ENCODE measurements at regions of chr1 and their contacts with region 1.

Region 1: GRCh38 chr1:155609515-155610256 is at the start of gene MSTO1:
- DNase-seq: peak; percentile 80
- ATAC-seq: peak; percentile 97
- H3K4me3 ChIP-seq: peak within 1 kb of the TSS; percentile 62 to 69
- H3K27ac ChIP-seq: peak within 1 kb of the TSS; percentile 97
- H3K4me1 ChIP-seq: no peaks in the 10 kb centered on the region
- H3K27me3 ChIP-seq: no peaks in the 10 kb centered on the region
- CTCF ChIP-seq: no peak
- total RNA-seq, gene MSTO1: 60.9 TPM

Region 2: DNA sequence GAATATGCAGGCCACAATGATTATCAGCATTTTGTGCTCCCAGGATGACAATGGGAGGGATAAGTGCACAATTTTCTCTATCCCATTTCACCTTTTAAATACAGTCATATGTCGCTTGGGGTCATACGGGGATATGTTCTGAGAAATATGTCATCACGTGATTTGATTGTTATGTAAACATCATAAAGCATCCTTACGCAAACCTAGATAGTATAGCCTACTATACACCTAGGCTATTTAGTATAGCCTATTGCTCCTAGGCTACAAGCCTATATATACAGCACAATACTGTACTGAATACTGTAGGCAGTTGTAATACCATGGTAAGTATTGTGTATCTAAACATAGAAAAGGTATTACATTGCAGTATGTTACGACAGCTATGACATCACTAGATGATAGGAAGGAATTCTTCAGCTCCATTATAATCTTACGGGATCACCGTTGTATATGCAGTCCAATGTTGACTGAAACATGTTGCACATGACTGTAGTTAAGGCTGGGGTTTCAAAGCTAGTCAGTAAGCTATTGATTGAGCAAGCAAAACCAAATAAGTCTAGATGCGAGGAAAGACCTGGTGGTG is 270.1 kb before region 1 on chr1:
- CTCF ChIA-PET with region 1: no interaction called
- POLR2A ChIA-PET with region 1: interaction called, 10 read pairs
- in situ Hi-C with region 1: no loop called
- intact Hi-C with region 1: no loop called
- DNase-seq: no peak
- ATAC-seq: no peak; the same call in 1 of the 2 replicates
- H3K4me3 ChIP-seq: no peak overlapping the region
- H3K27ac ChIP-seq: no peak overlapping the region
- H3K4me1 ChIP-seq: no peaks in the 10 kb centered on the region
- H3K27me3 ChIP-seq: no peaks in the 10 kb centered on the region
- CTCF ChIP-seq: no peak

Region 3: GRCh38 chr1:155648551-155649147 is 39.0 kb after region 1 on chr1:
- CTCF ChIA-PET with region 1: interaction called, 16 read pairs
- POLR2A ChIA-PET with region 1: interaction called, 3 read pairs
- in situ Hi-C with region 1: no loop called
- intact Hi-C with region 1: no loop called
- DNase-seq: no peak
- ATAC-seq: peak; percentile 90
- H3K4me3 ChIP-seq: peak overlapping the region; percentile 18 to 31
- H3K27ac ChIP-seq: peak overlapping the region; percentile 20
- H3K4me1 ChIP-seq: peaks cover 27% of the 10 kb centered on the region
- H3K27me3 ChIP-seq: no peaks in the 10 kb centered on the region
- CTCF ChIP-seq: peak; percentile 88

Measured in Panc1 (cell line).